ENCODE measurements at regions of chr2 and their contacts with region 1.

Region 1: GRCh38 chr2:73176881-73177644 is 25.3 kb upstream of the NOTO start:
- DNase-seq: peak; percentile 97
- H3K4me3 ChIP-seq: peak overlapping the region; percentile 57 to 61
- H3K27ac ChIP-seq: no peak overlapping the region
- H3K4me1 ChIP-seq: peaks cover 0 to 30% of the 10 kb centered on the region in 2 experiments; a peak in 1 of 4 replicates
- H3K27me3 ChIP-seq: peaks cover 27% of the 10 kb centered on the region
- CTCF ChIP-seq: peak; percentile 90
- EP300 ChIP-seq: no peak
- RAD21 ChIP-seq: peak; percentile 85

Region 2: GRCh38 chr2:72862239-72862988 is 314.6 kb before region 1 on chr2:
- CTCF ChIA-PET with region 1: interaction called, 14 read pairs
- POLR2A ChIA-PET with region 1: no interaction called
- DNase-seq: peak; percentile 91
- H3K4me3 ChIP-seq: peak overlapping the region; percentile 31 to 37
- H3K27ac ChIP-seq: no peak overlapping the region
- H3K4me1 ChIP-seq: peaks cover 0 to 9% of the 10 kb centered on the region in 2 experiments; a peak in 1 of 4 replicates
- H3K27me3 ChIP-seq: peaks cover 5% of the 10 kb centered on the region; the same call in 1 of the 2 replicates
- CTCF ChIP-seq: peak; percentile 95
- EP300 ChIP-seq: no peak
- RAD21 ChIP-seq: peak; percentile 75

Region 3: DNA sequence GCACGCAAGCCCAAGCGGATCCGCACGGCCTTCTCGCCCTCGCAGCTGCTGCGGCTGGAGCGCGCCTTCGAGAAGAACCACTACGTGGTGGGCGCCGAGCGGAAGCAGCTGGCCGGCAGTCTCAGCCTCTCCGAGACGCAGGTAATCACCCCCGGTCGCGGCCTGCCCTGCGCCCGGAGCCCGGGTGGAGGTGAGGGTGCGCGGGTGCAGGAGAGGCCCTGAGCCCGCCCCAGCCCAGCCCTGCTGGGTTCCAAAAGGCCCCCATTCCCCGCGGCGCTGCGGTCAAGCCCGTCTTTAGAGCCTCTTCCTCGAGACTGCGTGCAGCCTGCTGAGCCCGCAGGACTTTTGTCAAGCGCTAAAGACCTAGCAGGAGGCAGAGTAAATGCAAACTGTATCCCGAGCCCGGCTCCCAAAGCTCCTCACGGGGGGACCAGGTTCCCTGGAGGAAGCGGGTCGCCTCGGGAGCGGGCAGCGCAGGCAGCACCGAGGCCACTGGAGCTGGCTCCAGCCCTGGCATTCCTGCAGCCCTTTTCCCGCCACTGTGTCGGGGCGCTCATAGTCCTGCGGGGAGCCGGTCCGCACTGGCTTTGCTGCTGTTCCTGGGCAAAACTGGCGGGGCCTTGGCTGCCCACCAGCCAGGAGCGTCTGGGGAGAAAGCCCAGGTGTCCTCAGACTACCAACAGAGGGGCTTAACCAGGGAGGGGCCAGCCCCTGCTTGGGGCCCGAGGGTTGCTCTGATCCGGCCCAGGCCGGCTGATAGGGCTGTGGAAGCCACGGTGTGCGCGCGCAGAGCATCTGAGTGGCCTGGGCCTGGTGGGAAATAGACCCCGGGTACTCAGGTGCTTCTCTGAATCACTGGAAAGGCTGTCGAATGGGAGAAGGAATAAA is 252.5 kb before region 1 on chr2:
- CTCF ChIA-PET with region 1: interaction called, 34 read pairs
- POLR2A ChIA-PET with region 1: no interaction called
- DNase-seq: peak; percentile 60
- H3K4me3 ChIP-seq: no peak overlapping the region
- H3K27ac ChIP-seq: no peak overlapping the region
- H3K4me1 ChIP-seq: peaks cover 3 to 7% of the 10 kb centered on the region in 2 experiments; a peak in 2 of 4 replicates
- H3K27me3 ChIP-seq: peaks cover 98% of the 10 kb centered on the region
- CTCF ChIP-seq: no peak
- EP300 ChIP-seq: no peak
- RAD21 ChIP-seq: no peak

Region 4: GRCh38 chr2:73071360-73072133 is 105.5 kb before region 1 on chr2 and contains the start of gene SFXN5:
- CTCF ChIA-PET with region 1: interaction called, 12 read pairs
- POLR2A ChIA-PET with region 1: no interaction called
- DNase-seq: peak; percentile 99
- H3K4me3 ChIP-seq: peak within 1 kb of the TSS; percentile 92 to 98
- H3K27ac ChIP-seq: peak within 1 kb of the TSS; percentile 81 to 88
- H3K4me1 ChIP-seq: peaks cover 3 to 15% of the 10 kb centered on the region in 2 experiments; a peak in 2 of 4 replicates
- H3K27me3 ChIP-seq: no peaks in the 10 kb centered on the region
- CTCF ChIP-seq: peak; percentile 25
- EP300 ChIP-seq: no peak
- RAD21 ChIP-seq: no peak
- polyA plus RNA-seq, gene SFXN5: 9.9 and 11.0 TPM in 2 replicates

Region 5: GRCh38 chr2:73103018-73103542 is 74.0 kb before region 1 on chr2:
- CTCF ChIA-PET with region 1: interaction called, 10 read pairs
- POLR2A ChIA-PET with region 1: no interaction called
- DNase-seq: peak; percentile 86
- H3K4me3 ChIP-seq: no peak overlapping the region
- H3K27ac ChIP-seq: peak overlapping the region; percentile 46 to 81
- H3K4me1 ChIP-seq: peaks cover 19 to 39% of the 10 kb centered on the region in 2 experiments
- H3K27me3 ChIP-seq: no peaks in the 10 kb centered on the region
- CTCF ChIP-seq: no peak
- EP300 ChIP-seq: peak; percentile 46 to 93; a peak in 3 of 4 replicates
- RAD21 ChIP-seq: peak; percentile 20

Region 6: DNA sequence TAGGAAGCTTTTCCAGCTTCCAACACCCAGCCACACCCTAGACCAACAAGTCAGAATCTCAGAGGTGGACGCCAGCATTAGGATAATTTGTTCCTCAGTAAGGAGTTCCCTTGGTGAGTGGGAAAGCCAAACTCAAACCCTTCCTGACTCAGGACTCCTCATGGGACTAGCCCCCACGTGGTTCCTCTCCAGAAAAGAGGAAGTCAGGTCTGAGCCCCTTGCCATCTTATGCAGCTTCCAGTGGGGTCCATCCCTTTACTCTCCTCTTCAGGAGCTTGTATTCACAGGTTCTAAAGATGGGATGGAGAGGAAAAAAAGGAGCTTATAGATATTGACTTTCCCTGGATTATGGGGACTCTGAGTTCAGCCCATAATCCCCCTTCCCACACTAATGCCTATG is 10.5 kb after region 1 on chr2:
- CTCF ChIA-PET with region 1: interaction called, 35 read pairs
- POLR2A ChIA-PET with region 1: no interaction called
- DNase-seq: no peak
- H3K4me3 ChIP-seq: no peak overlapping the region
- H3K27ac ChIP-seq: no peak overlapping the region
- H3K4me1 ChIP-seq: no peaks in the 10 kb centered on the region
- H3K27me3 ChIP-seq: peaks cover 47% of the 10 kb centered on the region; the same call in 1 of the 2 replicates
- CTCF ChIP-seq: no peak
- EP300 ChIP-seq: no peak
- RAD21 ChIP-seq: no peak